Activated naive CD4-positive, alpha-beta T cell treated with anti-CD3 and anti-CD28 coated beads for 36 hours (primary cell): ENCODE measurements at regions of chr3 and their contacts with region 1.

Region 1: GRCh38 chr3:115692887-115693524 is 69.7 kb downstream of the GAP43 start:
- DNase-seq: peak; percentile 86
- H3K4me3 Mint-ChIP-seq: no peak overlapping the region
- H3K27ac Mint-ChIP-seq: no peak overlapping the region
- H3K4me1 Mint-ChIP-seq: peaks cover 2% of the 10 kb centered on the region
- H3K27me3 Mint-ChIP-seq: no peaks in the 10 kb centered on the region

Region 2: DNA sequence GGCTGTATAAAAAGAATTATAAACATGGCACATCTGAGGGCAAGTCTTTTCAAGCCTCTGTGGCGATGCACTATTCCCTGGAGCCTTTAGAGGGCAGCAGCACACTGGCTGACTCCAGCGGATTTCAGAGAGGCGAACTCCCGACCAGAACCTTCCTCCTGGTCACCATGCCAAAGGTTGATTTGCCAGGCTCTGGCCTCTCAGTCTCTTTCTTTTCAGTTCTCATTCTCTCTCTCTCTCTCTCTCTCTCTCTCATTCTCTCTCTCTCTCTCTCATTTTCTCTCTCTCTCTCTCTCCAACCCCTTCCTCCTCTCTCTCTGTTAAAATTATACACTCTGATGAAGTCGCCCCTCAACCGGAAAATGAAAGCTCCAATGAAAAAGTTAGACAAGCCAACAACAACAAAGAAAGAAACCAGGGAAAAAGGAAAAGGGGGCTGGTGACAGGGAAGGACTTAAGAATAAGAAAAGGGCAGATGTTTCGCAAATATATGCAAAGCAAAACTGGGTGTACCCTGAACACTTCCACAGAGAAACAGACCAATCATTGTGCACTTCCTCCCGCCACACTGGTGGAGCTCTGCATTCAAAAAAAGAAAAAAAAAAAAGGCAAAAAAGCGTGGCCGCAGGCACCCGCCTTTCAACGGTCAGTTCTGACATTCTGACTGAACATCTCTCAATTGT is 1309.0 kb before region 1 on chr3:
- CTCF ChIA-PET with region 1: no interaction called
- intact Hi-C with region 1: loop called (anchors 2 kb)
- DNase-seq: peak; percentile 82
- H3K4me3 Mint-ChIP-seq: peak overlapping the region; percentile 70
- H3K27ac Mint-ChIP-seq: peak overlapping the region; percentile 67
- H3K4me1 Mint-ChIP-seq: peaks cover 13% of the 10 kb centered on the region
- H3K27me3 Mint-ChIP-seq: no peaks in the 10 kb centered on the region

Region 3: DNA sequence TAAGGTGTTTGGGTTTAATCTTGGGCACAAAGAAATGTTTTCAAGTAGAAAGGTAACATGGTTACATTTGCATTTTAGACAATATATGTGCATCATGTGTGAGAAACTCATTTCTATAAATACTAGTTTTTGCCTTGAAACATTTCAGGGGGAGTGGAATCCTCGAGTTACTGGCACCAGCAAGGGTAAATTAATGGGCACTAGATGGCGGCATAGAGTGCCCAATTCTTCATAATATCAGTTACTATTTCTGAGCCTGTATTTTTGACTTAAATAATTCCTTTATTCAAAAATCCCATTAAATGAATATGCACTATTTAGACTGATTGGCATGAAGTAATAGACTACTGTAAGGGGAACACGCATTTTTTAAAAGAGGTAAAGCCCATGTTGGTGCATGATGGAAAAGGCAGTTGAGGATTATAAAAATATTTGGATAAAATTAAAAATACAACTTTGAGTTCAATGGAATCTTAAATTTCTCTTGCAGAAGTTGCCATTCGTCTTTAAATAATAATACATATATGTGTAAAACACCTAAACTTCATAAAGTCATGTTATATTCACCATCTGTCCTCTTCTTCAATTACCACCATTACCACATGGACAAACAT is 652.2 kb before region 1 on chr3:
- CTCF ChIA-PET with region 1: interaction called, 3 read pairs
- intact Hi-C with region 1: loop called (anchors 1 kb)
- DNase-seq: peak; percentile 65
- H3K4me3 Mint-ChIP-seq: no peak overlapping the region
- H3K27ac Mint-ChIP-seq: no peak overlapping the region
- H3K4me1 Mint-ChIP-seq: peaks cover 16% of the 10 kb centered on the region
- H3K27me3 Mint-ChIP-seq: no peaks in the 10 kb centered on the region

Region 4: DNA sequence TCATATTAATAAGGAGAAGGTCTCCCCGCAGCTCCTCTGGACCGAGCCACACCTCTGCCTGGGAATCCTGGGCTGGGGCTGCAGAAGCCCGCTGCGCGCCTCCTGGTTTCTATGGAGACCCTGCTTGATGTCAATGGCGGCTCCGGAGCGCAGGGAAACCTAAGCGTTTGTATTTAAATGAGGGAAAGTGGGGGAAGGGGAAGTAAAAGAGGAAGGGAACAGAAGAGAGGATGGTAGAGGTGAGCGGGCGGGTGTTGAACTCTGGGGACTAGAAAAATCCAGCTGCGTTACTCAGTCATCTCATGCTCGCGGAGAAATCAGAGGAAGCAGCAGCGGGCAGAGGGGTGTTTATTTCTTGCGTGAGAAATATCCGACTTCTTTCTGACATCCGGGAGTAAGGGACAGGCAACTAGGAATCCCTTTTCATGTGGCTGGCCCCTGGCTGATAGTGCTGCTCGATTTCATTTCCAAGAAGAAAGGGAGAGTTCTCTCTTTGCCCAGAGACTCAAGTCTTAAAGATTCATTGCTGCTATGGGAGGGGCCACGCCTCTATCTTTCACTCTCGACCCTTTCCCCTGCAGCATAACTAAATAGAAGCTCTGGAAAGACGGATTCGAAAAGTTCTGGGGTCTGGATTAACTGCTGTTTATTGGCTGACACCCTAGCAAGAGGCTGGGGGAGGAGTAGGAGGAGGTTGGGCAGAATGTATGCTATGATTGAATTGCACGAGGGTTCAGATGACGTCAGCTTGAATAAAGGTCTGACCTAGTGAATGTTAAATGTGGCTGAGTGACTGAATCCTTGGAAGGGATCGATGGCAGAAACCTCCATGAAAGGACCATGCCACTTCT is 180.2 kb before region 1 on chr3:
- CTCF ChIA-PET with region 1: no interaction called
- intact Hi-C with region 1: loop called (anchors 10 kb)
- DNase-seq: peak; percentile 50
- H3K4me3 Mint-ChIP-seq: peak overlapping the region; percentile 83
- H3K27ac Mint-ChIP-seq: no peak overlapping the region
- H3K4me1 Mint-ChIP-seq: peaks cover 20% of the 10 kb centered on the region
- H3K27me3 Mint-ChIP-seq: peaks cover 33% of the 10 kb centered on the region

Region 5: DNA sequence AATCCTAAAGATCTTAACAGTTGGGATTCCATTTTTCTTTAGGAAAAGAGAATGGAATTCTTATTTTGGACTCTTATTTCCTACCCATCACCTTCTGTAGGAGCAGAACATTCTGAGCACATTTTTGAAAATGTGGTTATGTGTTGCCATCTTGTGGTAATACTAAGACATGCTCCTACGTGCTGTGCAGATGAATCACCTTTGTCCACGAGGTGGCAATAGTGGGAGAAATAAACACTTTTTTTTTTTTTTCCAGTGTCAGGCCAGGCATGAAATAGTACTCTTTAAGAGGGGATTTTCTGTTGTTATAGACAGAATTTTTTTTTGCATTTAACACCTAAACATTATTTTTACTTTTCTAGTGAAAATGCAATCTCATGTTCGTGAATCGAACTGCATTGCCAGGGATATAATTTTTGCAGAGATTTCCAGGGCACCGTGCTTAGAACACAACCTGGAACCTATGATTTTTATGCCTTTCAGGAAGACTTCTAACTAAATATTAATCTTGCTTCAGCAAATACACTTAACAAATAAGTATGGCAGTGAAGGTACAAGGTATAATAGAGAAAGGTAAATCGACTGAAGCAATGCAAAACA is 126.9 kb after region 1 on chr3:
- CTCF ChIA-PET with region 1: interaction called, 8 read pairs
- intact Hi-C with region 1: loop called (anchors 1 kb)
- DNase-seq: peak; percentile 79
- H3K4me3 Mint-ChIP-seq: no peak overlapping the region
- H3K27ac Mint-ChIP-seq: no peak overlapping the region
- H3K4me1 Mint-ChIP-seq: no peaks in the 10 kb centered on the region
- H3K27me3 Mint-ChIP-seq: no peaks in the 10 kb centered on the region